Endothelial cell of umbilical vein (primary cell): ENCODE measurements at regions of chr1 and their contacts with region 1.

Region 1: DNA sequence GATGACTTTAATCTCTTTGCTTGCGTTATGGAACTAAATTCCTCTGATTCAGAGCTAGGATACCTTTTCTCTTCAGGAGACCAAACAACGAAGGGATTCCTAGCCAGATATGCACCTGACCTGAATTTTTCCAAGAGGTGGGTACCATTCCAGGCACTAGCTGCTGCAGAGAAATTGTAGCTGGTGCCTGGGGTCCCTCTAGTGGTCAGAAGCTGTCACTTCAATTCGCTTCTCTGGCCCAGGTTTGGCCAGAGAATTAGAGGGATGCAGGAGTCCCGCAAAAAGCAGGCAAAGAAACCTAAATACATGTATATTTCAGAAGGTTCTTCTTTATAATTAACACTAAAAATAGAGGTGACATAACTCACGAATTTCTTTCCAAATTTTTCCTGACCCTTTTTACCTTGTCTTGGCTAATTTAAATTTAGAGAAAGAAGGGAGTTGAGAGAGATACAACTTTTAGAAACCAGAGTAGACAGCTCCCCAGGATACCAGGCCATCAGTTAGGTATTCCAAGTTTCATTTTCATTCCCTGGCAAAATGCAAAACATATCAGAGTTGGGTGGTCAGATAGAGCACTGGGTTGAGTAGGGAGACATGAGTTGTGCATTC is 9.6 kb downstream of the ACKR1 start:
- DNase-seq: peak; percentile 49
- H3K4me3 ChIP-seq: no peak overlapping the region
- H3K27ac ChIP-seq: no peak overlapping the region
- H3K4me1 ChIP-seq: peaks cover 12% of the 10 kb centered on the region
- H3K27me3 ChIP-seq: no peaks in the 10 kb centered on the region
- CTCF ChIP-seq: peak; percentile 84 to 85
- POLR2A ChIP-seq: no peak

Region 2: GRCh38 chr1:159161001-159161718 is 53.1 kb before region 1 on chr1:
- CTCF ChIA-PET with region 1: interaction called, 33 read pairs
- POLR2A ChIA-PET with region 1: no interaction called
- dilution Hi-C with region 1: no loop called
- intact Hi-C with region 1: loop called (anchors 1 kb)
- DNase-seq: peak; percentile 86
- H3K4me3 ChIP-seq: no peak overlapping the region
- H3K27ac ChIP-seq: no peak overlapping the region
- H3K4me1 ChIP-seq: peaks cover 7% of the 10 kb centered on the region
- H3K27me3 ChIP-seq: peaks cover 5 to 10% of the 10 kb centered on the region in 2 experiments
- CTCF ChIP-seq: peak; percentile 96 to 99
- POLR2A ChIP-seq: peak; percentile 25

Region 3: GRCh38 chr1:159229486-159229885 is 15.2 kb after region 1 on chr1:
- CTCF ChIA-PET with region 1: interaction called, 16 read pairs
- POLR2A ChIA-PET with region 1: no interaction called
- dilution Hi-C with region 1: no loop called
- intact Hi-C with region 1: no loop called
- DNase-seq: no peak
- H3K4me3 ChIP-seq: no peak overlapping the region
- H3K27ac ChIP-seq: no peak overlapping the region
- H3K4me1 ChIP-seq: no peaks in the 10 kb centered on the region
- H3K27me3 ChIP-seq: no peaks in the 10 kb centered on the region
- CTCF ChIP-seq: no peak
- POLR2A ChIP-seq: no peak

Region 4: DNA sequence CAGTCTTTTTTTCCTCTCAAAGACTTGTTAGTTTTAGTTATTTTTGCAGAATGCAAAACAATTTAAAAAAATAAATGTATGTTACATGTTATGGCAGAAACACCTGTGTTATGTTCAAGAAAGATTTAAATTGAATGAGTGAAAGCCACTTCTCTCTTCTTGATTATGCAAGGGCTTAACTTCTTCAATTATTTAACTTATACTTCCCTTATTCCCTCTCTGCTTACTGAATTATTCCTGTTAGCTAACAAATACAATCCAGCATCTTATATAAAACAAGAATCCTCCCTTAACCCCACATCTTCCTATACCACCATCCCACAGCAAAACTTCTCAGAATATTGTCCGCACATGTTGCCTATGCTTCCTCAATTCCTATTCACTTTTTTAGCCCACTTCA is 77.2 kb after region 1 on chr1:
- CTCF ChIA-PET with region 1: no interaction called
- POLR2A ChIA-PET with region 1: no interaction called
- dilution Hi-C with region 1: no loop called
- intact Hi-C with region 1: no loop called
- DNase-seq: no peak
- H3K4me3 ChIP-seq: no peak overlapping the region
- H3K27ac ChIP-seq: no peak overlapping the region
- H3K4me1 ChIP-seq: no peaks in the 10 kb centered on the region
- H3K27me3 ChIP-seq: no peaks in the 10 kb centered on the region
- CTCF ChIP-seq: no peak
- POLR2A ChIP-seq: no peak

Region 5: GRCh38 chr1:159469921-159470533 is 255.8 kb after region 1 on chr1:
- CTCF ChIA-PET with region 1: interaction called, 5 read pairs
- POLR2A ChIA-PET with region 1: no interaction called
- dilution Hi-C with region 1: no loop called
- intact Hi-C with region 1: loop called (anchors 5 kb)
- DNase-seq: peak; percentile 79
- H3K4me3 ChIP-seq: no peak overlapping the region
- H3K27ac ChIP-seq: peak overlapping the region; percentile 78
- H3K4me1 ChIP-seq: peaks cover 50% of the 10 kb centered on the region
- H3K27me3 ChIP-seq: no peaks in the 10 kb centered on the region
- CTCF ChIP-seq: no peak
- POLR2A ChIP-seq: peak; percentile 25

Region 6: DNA sequence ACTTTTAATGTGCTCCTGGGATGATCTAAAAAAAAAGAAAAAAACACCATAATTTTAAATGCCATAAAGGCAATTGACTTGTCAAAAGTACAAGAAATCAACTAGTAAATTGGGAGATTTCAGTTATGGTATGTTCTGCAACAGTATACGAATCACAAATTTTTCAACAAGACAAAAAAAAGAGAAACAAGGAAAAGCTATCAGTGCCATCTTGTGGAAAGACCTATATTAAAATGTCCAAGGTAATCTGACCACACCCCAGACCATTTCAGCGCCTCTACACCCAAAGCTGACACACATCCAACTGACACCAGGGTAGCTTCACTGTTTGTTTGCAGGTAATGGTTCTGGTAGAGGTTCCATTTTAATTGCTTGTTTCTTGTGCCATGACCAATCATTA is 561.5 kb after region 1 on chr1:
- CTCF ChIA-PET with region 1: interaction called, 61 read pairs
- POLR2A ChIA-PET with region 1: no interaction called
- dilution Hi-C with region 1: no loop called
- intact Hi-C with region 1: loop called (anchors 2 kb)
- DNase-seq: peak; percentile 46
- H3K4me3 ChIP-seq: no peak overlapping the region
- H3K27ac ChIP-seq: peak overlapping the region; percentile 9
- H3K4me1 ChIP-seq: peaks cover 53% of the 10 kb centered on the region
- H3K27me3 ChIP-seq: no peaks in the 10 kb centered on the region
- CTCF ChIP-seq: no peak
- POLR2A ChIP-seq: peak; percentile 49

Region 7: GRCh38 chr1:159790237-159790917 is 576.1 kb after region 1 on chr1:
- CTCF ChIA-PET with region 1: interaction called, 15 read pairs
- POLR2A ChIA-PET with region 1: no interaction called
- dilution Hi-C with region 1: no loop called
- intact Hi-C with region 1: loop called (anchors 1 kb)
- DNase-seq: peak; percentile 57
- H3K4me3 ChIP-seq: no peak overlapping the region
- H3K27ac ChIP-seq: no peak overlapping the region
- H3K4me1 ChIP-seq: peaks cover 16% of the 10 kb centered on the region
- H3K27me3 ChIP-seq: no peaks in the 10 kb centered on the region
- CTCF ChIP-seq: peak; percentile 61 to 65
- POLR2A ChIP-seq: no peak